ENCODE measurements at regions of chrX and their contacts with region 1.

Region 1: DNA sequence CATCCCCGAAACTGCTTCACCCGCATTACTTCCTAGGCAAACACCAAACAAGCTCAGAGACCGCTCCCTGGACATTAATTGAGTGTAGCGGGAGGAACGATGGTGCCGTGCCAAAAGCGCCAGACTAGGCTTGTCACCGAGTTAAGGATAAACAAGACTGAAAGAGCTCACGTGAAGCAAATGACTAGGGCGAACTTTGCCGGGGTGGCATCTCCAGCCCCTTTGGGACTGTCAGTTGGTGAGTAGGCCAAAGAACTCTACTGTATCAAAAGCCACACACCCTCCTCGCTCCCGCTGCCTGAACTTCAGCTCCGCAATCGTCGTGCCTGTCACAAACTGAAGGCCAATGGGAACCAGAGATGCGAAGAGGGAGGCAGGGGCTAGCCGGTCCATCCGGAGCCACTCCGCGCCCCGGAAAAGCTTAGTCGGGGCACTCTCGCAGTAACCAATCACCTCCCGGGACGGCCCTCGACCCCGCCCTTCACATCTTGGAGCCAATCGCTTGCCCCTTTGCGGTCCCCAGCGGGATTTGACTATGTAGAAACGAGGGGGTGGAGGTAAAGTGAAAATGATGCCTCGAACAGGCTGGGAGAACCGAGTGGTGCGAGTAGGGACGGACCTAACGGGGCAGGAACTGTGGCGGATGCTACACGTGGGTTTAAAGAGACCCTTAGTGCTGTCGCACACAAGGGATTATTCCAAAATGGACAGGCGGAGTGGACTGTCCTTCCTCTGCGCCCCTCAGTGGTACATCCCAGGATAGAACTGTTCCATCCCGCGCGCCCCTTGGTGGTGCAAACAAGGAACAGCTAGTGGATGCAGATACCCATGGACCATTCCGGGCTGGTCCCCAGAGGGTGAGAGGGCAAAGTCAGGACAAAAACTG is 37.1 kb upstream of the FAM156A start:
- DNase-seq: peak; percentile 89 to 97
- ATAC-seq: peak; percentile 98 to 99
- H3K4me3 ChIP-seq: peak overlapping the region; percentile 71
- H3K27ac ChIP-seq: peak overlapping the region; percentile 99
- H3K4me1 ChIP-seq: peaks cover 9% of the 10 kb centered on the region; the same call in 1 of the 3 replicates
- CTCF ChIP-seq: peak; percentile 52
- EP300 ChIP-seq: no peak
- POLR2A ChIP-seq: peak; percentile 28
- RAD21 ChIP-seq: peak in 1 of 2 experiments; percentile 25; a peak in 4 of 5 replicates

Region 2: GRCh38 chrX:52595841-52596240 is 399.5 kb before region 1 on chrX:
- CTCF ChIA-PET with region 1: no interaction called
- POLR2A ChIA-PET with region 1: no interaction called
- DNase-seq: no peak
- ATAC-seq: no peak
- H3K4me3 ChIP-seq: no peak overlapping the region
- H3K27ac ChIP-seq: no peak overlapping the region
- H3K4me1 ChIP-seq: no peaks in the 10 kb centered on the region
- CTCF ChIP-seq: no peak
- EP300 ChIP-seq: no peak
- POLR2A ChIP-seq: no peak
- RAD21 ChIP-seq: no peak

Region 3: DNA sequence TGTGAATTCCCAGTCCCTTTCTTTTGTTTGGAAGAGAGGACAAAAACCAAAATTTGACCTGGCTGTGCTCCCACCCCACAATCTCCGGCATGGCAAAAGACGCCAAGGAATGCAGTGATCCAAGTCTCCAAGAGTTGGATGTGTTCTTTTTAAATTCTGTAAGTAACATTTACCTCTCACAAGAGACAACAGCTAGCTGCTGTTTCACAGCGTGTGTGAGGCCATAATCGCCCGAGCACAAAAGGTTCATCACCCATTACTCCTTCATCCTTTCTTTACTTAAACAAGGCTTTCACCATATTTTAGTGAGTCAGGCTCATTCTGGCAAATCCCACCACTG is 11.7 kb before region 1 on chrX:
- CTCF ChIA-PET with region 1: interaction called, 15 read pairs
- POLR2A ChIA-PET with region 1: interaction called, 3 read pairs
- DNase-seq: no peak
- ATAC-seq: no peak
- H3K4me3 ChIP-seq: no peak overlapping the region
- H3K27ac ChIP-seq: no peak overlapping the region
- H3K4me1 ChIP-seq: peaks cover 21% of the 10 kb centered on the region
- CTCF ChIP-seq: no peak
- EP300 ChIP-seq: no peak
- POLR2A ChIP-seq: no peak
- RAD21 ChIP-seq: no peak

Measured in A549 (cell line).